ENCODE measurements at regions of chr1 and their contacts with region 1.

Region 1: GRCh38 chr1:231421993-231422764 is at the start of gene EGLN1:
- DNase-seq: peak; percentile 93
- ATAC-seq: peak; percentile 92
- total RNA-seq, gene EGLN1: 79.8 TPM

Region 2: DNA sequence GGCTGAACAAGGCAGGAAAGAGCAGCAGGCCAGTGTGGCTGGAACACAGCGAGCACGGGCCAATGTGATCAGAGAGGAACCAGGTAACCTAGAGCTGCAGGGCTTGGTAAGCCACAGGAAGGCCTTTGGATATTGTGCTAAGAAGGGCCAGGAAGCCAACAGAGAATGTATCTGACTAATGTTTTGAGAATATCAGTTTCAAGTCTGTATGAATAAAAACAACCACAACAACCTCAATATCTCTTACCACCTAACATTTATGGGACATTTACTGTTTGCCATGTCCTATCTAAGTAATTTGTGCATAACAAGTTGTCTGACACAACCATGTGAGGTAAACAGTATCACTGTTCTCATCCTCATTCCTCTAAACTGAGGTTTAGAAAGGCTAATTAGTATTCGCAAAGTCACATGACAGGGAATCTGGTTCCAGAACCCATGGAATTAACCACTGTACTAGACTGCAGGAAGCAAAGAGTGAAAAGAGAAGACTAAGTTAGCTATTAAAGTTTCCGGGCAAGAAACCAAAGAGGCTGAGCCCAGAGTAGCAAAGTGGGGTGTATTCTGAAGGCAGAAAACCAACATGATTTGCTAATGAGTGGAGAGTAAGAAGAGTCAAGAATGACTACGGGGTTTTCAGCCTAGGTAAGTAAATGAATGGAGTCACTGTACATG is 45.2 kb before region 1 on chr1:
- intact Hi-C with region 1: loop called (anchors 5 kb)
- DNase-seq: no peak
- ATAC-seq: peak; percentile 19

Region 3: DNA sequence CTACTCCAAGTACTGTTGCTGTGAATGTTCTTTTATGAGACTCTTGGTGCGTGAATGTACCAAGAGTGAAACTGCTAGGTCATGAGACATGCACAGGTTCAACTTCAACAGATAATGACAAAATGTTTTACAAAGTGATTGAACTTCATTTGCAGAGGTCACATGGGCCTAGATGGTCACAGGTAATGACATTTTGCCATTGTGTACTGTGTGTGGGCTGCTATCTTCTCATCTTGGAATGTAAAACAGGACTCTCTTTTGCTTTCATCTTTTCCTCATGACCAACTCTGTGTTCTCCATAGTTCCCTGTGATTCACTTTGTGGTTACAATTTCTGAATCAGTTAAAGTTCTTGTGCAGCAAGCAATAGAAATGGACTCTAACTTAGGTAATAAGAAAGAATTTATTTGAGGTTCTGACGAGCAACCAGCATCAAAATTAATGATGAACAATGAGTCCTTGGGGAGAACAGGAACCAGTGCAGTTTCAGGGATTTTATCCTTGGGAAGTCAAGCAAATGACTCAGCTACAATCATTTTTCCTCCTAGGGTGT is 90.0 kb after region 1 on chr1:
- intact Hi-C with region 1: no loop called
- DNase-seq: no peak
- ATAC-seq: no peak

Region 4: DNA sequence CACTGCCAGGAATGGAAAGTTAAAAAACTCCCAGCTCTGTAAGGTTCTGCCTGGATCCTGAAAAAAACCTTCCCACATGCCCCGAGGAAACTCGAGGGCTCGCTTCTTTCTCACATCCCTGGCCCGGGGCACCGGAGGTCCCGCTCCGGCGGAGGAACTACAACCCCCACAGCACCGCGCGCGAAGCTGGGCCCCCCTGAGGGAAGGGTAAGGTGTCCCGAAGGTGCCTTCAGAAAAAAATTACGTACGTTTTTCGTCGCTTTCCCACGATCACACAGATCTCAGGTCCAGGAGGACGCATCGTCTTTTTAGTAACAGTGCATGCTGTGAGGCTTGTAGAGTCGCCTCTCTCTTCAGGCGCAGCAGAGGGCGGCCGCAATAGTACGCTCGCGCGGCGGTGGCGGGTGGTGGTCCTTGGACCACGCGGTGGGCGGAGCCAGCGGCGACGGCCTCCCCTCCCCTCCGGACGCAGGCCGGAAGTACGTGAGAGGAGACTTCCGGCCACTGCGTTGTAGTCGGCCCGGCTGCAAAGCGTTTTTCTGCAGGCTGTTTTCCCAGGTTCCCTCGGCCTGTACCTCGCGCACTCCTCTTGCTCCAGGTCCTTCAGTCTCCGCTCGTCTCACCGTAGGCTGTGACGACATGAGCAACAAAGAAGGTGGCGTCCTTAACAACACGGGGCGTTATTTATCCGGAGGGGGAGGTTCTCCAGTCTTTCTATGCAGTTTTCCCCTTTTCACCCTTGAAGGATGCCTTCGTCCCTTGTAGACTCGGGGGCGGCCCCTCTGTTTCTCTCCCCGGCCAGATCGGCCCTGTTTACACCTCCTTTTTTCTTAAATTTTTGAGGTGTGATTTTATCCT is 106.2 kb after region 1 on chr1 and contains the start of gene TSNAX:
- intact Hi-C with region 1: loop called (anchors 10 kb)
- DNase-seq: peak; percentile 95
- ATAC-seq: peak; percentile 99
- total RNA-seq, gene TSNAX: 26.7 TPM

Region 5: DNA sequence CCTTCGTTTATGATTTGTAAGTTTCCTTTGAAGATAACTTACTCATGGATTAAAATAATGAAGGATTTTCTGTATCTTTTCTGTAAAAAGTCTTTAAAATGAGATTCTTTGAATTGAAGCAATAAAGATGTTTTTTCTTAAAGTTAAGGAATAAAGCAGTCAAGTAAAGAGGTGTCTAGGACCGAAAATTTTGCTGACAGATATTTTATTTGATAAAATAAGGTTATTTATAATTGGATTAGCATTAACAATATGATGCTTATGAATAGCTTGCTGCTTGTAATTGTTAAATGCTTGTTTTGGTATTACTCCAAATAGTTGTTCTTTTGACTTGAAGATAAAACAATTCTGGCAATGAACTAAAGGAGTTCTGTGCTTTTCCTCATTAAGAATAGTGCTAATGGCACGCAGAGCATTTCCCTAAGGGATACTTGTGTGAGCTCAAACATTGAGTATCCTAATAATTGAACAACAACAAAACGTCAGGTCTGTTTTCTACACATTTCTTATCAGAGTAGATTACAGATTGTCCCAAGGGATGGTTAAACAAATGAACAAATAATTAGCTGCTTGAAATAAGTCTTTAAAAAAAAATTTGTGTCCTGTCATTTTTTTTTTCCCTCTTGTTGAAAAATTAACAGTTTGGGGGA is 122.9 kb after region 1 on chr1:
- intact Hi-C with region 1: loop called (anchors 5 kb)
- DNase-seq: no peak
- ATAC-seq: peak; percentile 70